ENCODE measurements at regions of chr2 and their contacts with region 1.

Region 1: GRCh38 chr2:65142515-65142914 is 12.6 kb upstream of the RAB1A start:
- DNase-seq: no peak
- ATAC-seq: peak; percentile 53
- H3K4me3 Mint-ChIP-seq: no peak overlapping the region
- H3K27ac Mint-ChIP-seq: no peak overlapping the region
- H3K4me1 Mint-ChIP-seq: peaks cover 5% of the 10 kb centered on the region
- H3K27me3 Mint-ChIP-seq: peaks cover 34% of the 10 kb centered on the region

Region 2: DNA sequence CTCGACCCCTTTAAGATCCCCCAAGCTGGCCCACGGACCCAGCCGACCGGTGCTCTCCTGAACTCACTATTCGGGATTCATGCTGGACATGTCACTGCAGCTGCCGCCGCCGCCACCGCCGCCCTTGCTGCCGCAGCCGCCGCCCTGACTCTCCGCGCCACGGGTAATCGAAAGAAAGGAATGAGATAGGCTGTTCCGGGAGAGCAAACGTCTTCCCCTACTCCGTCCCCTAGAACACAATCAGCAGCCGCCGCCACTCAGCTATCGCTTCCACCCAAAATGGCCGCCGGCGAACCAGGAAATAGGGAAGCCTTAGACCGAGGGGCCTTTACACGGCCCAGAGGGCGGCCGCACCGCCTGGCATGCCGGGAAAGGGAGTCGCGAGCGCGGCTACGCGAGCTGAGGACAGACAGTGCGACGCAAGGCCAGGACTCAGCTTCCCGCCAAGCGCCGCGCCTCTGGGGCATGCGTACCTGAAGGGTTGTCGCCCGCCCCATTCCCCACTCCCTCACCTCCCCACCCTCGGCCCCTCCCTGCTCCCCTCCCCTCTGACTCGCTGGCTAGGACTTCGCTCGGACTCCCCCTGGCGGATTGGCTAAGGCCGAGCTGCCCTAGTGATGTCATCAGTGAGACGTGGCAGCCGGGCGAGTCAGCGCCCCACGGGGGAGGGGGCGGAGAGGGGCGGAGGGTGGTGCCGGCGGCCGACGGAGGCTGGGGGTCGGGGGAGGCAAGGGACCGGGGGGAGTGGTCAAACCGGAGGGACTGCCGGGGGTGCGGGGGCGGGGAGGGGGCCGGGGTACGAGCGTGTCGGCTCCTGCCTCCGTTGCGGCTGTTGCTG is 12.5 kb before region 1 on chr2 and contains the start of gene RAB1A:
- CTCF ChIA-PET with region 1: interaction called, 13 read pairs
- DNase-seq: peak; percentile 100
- ATAC-seq: peak; percentile 95
- H3K4me3 Mint-ChIP-seq: peak within 1 kb of the TSS; percentile 95
- H3K27ac Mint-ChIP-seq: peak within 1 kb of the TSS; percentile 99
- H3K4me1 Mint-ChIP-seq: peaks cover 40% of the 10 kb centered on the region
- H3K27me3 Mint-ChIP-seq: no peaks in the 10 kb centered on the region
- total RNA-seq, gene RAB1A: 58.4 to 78.3 TPM

Region 3: DNA sequence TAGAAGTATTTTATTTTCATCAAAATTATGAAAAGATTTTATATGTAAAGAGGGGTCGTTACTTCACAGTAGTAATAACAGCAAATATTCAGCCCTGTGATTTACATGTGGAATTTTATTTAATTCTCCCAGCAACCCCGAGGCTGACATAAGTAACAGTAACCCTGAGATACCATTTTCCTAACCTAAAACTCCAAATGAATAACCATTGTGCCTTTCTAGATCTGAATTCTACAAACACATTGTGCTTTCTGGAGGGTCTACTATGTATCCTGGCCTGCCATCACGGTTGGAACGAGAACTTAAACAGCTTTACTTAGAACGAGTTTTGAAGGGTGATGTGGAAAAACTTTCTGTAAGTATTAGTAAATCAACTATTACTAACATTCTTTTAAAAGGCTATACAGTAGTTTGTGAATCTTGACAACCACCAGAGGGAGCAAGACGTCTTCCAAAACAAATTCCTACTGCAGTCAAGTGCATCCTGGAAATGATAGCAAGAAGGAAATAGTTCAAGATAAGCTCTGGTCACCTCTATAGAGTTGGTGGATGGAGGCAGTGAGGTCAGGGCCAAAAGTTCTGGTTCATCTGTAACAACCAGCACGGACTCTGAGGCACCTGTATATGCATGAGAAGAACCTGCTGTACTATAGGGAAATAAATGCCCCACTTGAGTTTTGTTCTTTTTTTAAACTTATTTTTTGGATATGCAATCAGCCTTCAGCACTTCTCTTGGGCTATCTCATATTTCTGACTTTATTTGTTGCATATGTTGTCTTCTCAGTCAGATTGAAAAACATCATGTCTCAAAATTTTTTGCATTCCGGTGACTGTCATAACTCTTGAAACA is 122.5 kb after region 1 on chr2:
- CTCF ChIA-PET with region 1: no interaction called
- DNase-seq: no peak
- ATAC-seq: no peak
- H3K4me3 Mint-ChIP-seq: no peak overlapping the region
- H3K27ac Mint-ChIP-seq: no peak overlapping the region
- H3K4me1 Mint-ChIP-seq: no peaks in the 10 kb centered on the region
- H3K27me3 Mint-ChIP-seq: no peaks in the 10 kb centered on the region

Measured in activated CD8-positive, alpha-beta memory T cell treated with anti-CD3 and anti-CD28 coated beads, Interleukin-2, amount 10 ng/mL, durations not matched to agents 7 days and 5 days (primary cell).